CD14-positive monocyte (primary cell): ENCODE measurements at regions of chr16 and their contacts with region 1.

Region 1: DNA sequence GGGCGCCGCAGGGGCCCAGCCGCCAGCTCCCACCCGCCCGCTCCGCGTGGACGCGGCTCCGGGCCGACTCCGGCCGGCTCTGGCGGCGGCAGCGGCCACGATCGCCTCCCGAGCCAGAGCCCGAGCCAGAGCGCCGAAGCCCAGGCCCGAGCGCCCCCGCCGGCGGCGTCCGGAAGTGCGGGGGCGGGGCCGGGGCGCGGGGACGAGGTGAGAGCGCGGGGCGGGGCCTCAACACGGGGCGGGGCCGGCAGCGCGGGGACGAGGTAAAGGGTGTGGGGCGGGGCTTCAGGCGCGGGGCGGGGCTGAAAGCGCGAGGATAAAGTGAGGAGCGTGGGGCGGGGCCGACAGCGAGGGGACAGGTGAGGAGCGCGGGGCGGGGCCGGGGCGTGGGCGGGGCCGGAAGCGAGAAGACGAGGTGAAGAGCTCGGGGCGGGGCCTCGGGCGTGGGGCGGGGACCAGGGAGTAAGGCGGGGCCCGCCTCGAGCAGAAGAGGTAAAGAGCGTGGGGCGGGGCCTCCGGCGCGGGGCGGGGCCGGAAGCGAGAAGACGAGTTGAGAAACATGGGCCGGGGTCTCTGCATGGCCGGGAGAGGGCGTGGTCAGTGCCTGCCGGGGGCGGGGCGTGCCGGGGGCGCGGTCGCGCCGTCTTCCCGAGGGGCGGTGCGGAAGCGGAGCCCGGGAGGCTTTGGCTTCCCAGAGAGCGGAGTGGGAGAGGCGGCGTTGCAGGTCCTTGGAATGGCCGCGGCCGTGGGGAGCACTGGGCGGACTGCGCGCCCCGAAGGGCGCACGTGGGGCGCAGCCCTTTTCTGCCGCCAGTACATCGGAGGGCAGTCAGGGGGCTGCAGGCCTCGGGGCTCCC is at the start of gene AXIN1:
- DNase-seq: peak; percentile 91 to 93 (median 92)
- H3K4me3 ChIP-seq: peak within 1 kb of the TSS; percentile 51 to 79 (median 73)
- H3K4me3 Mint-ChIP-seq: peak within 1 kb of the TSS; percentile 84 to 87
- H3K27ac ChIP-seq: peak within 1 kb of the TSS in 1 of 2 donors; percentile 56
- H3K27ac Mint-ChIP-seq: peak within 1 kb of the TSS in 6 of 7 donors; percentile 56 to 86 (median 79)
- H3K4me1 ChIP-seq: peaks cover 12 to 25% of the 10 kb centered on the region in 2 donors
- H3K4me1 Mint-ChIP-seq: peaks cover 34% of the 10 kb centered on the region
- H3K27me3 ChIP-seq: no peaks in the 10 kb centered on the region
- H3K27me3 Mint-ChIP-seq: peaks cover 0 to 4% (median 3%) of the 10 kb centered on the region in 3 donors
- CTCF ChIP-seq: peak; percentile 35
- polyA plus RNA-seq, gene AXIN1: 0.30 to 20.9 (median 0.74) TPM

Region 2: DNA sequence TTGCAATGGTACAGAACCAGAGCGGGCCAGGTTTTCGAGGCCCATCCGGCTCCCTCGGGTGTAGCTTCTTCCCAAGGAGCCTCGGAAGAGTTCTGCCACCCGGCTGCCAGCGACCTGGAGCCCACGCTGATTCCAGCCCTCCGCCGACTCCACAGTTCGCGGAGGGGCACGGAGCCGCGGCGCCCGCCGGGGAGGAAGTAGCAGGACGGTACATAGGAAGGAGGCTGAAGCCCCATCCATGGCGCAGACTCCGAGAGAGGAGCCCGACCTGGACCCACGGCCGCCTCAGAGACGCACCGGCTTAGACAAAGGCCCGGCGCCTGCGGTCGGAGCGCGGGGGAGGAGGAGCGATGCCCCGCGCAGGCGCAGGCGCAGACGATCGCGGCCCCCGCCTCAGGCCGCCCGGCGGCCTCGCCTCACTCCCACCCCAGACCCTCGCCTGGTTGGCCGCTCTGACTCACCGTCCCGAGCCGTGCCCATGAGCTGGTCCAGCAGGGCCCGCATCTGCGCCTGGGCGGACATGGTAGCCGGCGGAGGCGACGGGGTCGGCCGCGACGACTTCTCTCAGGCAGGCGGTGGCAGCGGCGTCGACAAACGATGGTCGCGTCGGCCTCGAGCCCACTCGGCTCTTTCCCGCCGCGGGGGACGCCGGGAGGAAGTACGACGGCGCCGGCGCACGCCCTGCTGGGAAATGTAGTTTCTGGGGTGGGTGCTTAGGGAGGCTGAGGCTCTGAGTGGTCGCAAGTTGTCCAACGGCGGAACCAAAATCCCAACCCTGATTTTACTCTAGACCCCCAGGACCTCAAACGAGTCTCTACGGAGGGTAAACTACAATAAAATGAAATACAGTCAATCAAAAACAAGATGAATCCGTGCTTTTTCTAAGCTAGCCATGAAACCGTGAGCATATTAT is 123.7 kb before region 1 on chr16 and contains the start of gene LUC7L:
- intact Hi-C with region 1: loop called (anchors 2 to 5 kb)
- DNase-seq: peak; percentile 62 to 81 (median 67)
- H3K4me3 ChIP-seq: peak within 1 kb of the TSS; percentile 72 to 89 (median 87)
- H3K4me3 Mint-ChIP-seq: peak within 1 kb of the TSS; percentile 86 to 91
- H3K27ac ChIP-seq: peak within 1 kb of the TSS; percentile 74 to 94
- H3K27ac Mint-ChIP-seq: peak within 1 kb of the TSS; percentile 90 to 96 (median 94)
- H3K4me1 ChIP-seq: peaks cover 20 to 29% of the 10 kb centered on the region in 2 donors
- H3K4me1 Mint-ChIP-seq: peaks cover 16% of the 10 kb centered on the region
- H3K27me3 ChIP-seq: no peaks in the 10 kb centered on the region
- H3K27me3 Mint-ChIP-seq: peaks cover 0 to 1% (median 1%) of the 10 kb centered on the region in 3 donors
- CTCF ChIP-seq: no peak
- polyA plus RNA-seq, gene LUC7L: 4.0 to 109 (median 4.6) TPM

Region 3: GRCh38 chr16:234468-235305 is 118.1 kb before region 1 on chr16 and contains the start of gene FAM234A:
- intact Hi-C with region 1: loop called (anchors 2 to 5 kb)
- DNase-seq: peak; percentile 94 to 95 (median 95)
- H3K4me3 ChIP-seq: peak within 1 kb of the TSS; percentile 79 to 95 (median 94)
- H3K4me3 Mint-ChIP-seq: peak within 1 kb of the TSS; percentile 96 to 99
- H3K27ac ChIP-seq: peak within 1 kb of the TSS; percentile 100
- H3K27ac Mint-ChIP-seq: peak within 1 kb of the TSS; percentile 100
- H3K4me1 ChIP-seq: peaks cover 18 to 20% of the 10 kb centered on the region in 2 donors
- H3K4me1 Mint-ChIP-seq: peaks cover 13% of the 10 kb centered on the region
- H3K27me3 ChIP-seq: no peaks in the 10 kb centered on the region
- H3K27me3 Mint-ChIP-seq: peaks cover 0 to 6% (median 1%) of the 10 kb centered on the region in 3 donors
- CTCF ChIP-seq: peak; percentile 41
- polyA plus RNA-seq, gene FAM234A: 22.5 to 40.4 (median 25.1) TPM

Region 4: DNA sequence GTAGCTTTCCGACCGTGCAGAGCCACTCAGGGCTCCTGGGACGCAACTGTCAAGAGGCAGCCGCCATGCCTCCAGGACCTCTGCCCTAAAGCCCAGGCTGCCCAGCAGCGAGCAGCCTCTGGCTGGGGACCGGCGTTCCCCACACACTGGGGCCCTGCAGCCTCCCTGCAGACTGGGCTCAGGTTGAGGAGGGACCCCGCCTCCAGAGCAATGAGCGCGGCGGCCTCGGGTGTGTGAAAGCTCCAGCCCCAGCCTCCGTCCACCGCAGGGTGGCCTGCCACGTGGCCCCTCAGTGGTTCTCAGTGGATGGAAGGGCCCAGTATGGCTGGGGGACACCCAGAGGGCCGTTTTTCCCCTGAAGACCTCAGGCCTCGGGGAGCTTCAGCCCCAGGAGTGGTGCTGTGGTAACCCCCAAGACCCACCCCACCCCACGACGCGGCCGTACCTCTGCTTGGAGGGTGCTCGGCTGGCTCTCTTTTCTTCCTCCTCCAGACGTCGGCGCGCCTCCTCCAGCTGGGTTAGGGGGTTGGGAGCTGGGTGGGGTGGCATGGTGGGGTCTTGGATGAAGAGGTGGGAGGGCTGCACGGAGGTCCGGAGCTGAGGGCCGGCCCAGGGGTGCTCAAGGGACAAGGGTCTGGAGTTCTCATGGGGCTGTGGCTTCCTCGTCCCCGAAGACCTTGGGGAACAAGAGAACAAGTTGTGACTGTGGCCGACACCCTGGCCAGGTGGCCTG is 59.6 kb before region 1 on chr16:
- intact Hi-C with region 1: no loop called
- DNase-seq: no peak
- H3K4me3 ChIP-seq: no peak overlapping the region
- H3K4me3 Mint-ChIP-seq: no peak overlapping the region
- H3K27ac ChIP-seq: no peak overlapping the region
- H3K27ac Mint-ChIP-seq: no peak overlapping the region
- H3K4me1 ChIP-seq: no peaks in the 10 kb centered on the region
- H3K4me1 Mint-ChIP-seq: no peaks in the 10 kb centered on the region
- H3K27me3 ChIP-seq: no peaks in the 10 kb centered on the region
- H3K27me3 Mint-ChIP-seq: no peaks in the 10 kb centered on the region
- CTCF ChIP-seq: no peak

Region 5: GRCh38 chr16:303760-304505 is 48.8 kb before region 1 on chr16:
- intact Hi-C with region 1: loop called in 1 of 2 experiments (anchors 5 kb)
- DNase-seq: peak; percentile 33 to 43 (median 41)
- H3K4me3 ChIP-seq: no peak overlapping the region
- H3K4me3 Mint-ChIP-seq: no peak overlapping the region
- H3K27ac ChIP-seq: no peak overlapping the region
- H3K27ac Mint-ChIP-seq: peak overlapping the region in 6 of 7 donors; percentile 34 to 74 (median 55)
- H3K4me1 ChIP-seq: no peaks in the 10 kb centered on the region
- H3K4me1 Mint-ChIP-seq: no peaks in the 10 kb centered on the region
- H3K27me3 ChIP-seq: no peaks in the 10 kb centered on the region
- H3K27me3 Mint-ChIP-seq: peaks cover 0 to 1% (median 0%) of the 10 kb centered on the region in 3 donors
- CTCF ChIP-seq: peak; percentile 22

Region 6: GRCh38 chr16:381789-382717 is 29.3 kb after region 1 on chr16 and contains the start of gene PGAP6:
- intact Hi-C with region 1: loop called in 1 of 2 experiments (anchors 2 kb)
- DNase-seq: peak; percentile 39 to 72 (median 54)
- H3K4me3 ChIP-seq: peak within 1 kb of the TSS; percentile 78 to 92 (median 88)
- H3K4me3 Mint-ChIP-seq: peak within 1 kb of the TSS; percentile 91 to 92
- H3K27ac ChIP-seq: peak within 1 kb of the TSS in 1 of 2 donors; percentile 71
- H3K27ac Mint-ChIP-seq: peak within 1 kb of the TSS in 6 of 7 donors; percentile 49 to 93 (median 69)
- H3K4me1 ChIP-seq: peaks cover 39 to 52% of the 10 kb centered on the region in 2 donors
- H3K4me1 Mint-ChIP-seq: peaks cover 39% of the 10 kb centered on the region
- H3K27me3 ChIP-seq: no peaks in the 10 kb centered on the region
- H3K27me3 Mint-ChIP-seq: peaks cover 0 to 14% (median 9%) of the 10 kb centered on the region in 3 donors
- CTCF ChIP-seq: no peak
- polyA plus RNA-seq, gene PGAP6: 18.2 to 137 (median 39.8) TPM

Region 7: GRCh38 chr16:401468-402348 is 48.9 kb after region 1 on chr16 and contains the start of gene DECR2:
- intact Hi-C with region 1: no loop called
- DNase-seq: peak; percentile 81 to 88 (median 83)
- H3K4me3 ChIP-seq: peak within 1 kb of the TSS; percentile 86 to 97 (median 92)
- H3K4me3 Mint-ChIP-seq: peak within 1 kb of the TSS; percentile 93 to 97
- H3K27ac ChIP-seq: peak within 1 kb of the TSS; percentile 78 to 85
- H3K27ac Mint-ChIP-seq: peak within 1 kb of the TSS; percentile 90 to 98 (median 97)
- H3K4me1 ChIP-seq: peaks cover 25 to 32% of the 10 kb centered on the region in 2 donors
- H3K4me1 Mint-ChIP-seq: peaks cover 24% of the 10 kb centered on the region
- H3K27me3 ChIP-seq: no peaks in the 10 kb centered on the region
- H3K27me3 Mint-ChIP-seq: peaks cover under 1% of the 10 kb centered on the region in 3 donors
- CTCF ChIP-seq: peak; percentile 59
- polyA plus RNA-seq, gene DECR2: 5.7 to 12.8 (median 8.7) TPM

Region 8: DNA sequence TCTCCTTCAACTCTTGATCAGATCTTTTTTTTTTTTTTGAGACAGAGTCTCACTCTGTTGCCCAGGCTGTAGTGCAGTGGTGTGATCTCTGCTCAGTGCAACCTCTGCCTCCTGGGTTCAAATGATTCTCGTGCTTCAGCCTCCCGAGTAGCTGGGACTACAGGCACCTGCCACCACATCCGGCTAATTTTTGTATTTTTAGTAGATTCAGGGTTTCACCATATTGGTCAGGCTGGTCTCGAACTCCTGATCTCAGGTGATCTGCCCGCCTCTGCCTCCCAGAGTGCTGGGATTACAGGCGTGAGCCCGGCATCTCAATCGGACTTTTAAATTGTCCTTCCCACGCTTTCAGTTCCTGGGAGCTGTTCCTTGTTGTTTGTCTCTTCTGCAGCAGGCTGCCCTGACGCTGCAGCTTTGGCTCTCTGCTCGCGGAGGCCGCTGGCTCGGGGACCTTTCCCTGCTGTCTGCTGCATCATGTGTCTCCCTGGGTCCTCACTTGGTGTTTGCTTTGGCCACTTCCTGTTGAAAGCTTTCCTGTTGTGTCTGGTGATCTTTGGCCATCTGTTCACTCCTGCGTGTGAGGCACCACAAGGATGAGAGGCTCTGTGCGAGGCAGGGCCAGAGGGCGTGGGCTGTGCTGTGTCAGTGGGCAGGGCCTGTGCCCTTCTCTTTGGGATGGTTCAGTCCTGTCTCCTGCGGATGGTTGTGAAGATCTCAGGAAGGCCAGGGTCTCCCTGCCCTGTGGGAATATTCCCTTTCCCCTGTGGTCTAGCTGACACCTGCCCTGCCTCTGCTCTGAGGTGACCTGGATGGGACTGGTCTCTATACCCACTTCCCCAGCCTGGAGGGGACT is 156.3 kb after region 1 on chr16:
- intact Hi-C with region 1: no loop called
- DNase-seq: no peak
- H3K4me3 ChIP-seq: no peak overlapping the region
- H3K4me3 Mint-ChIP-seq: no peak overlapping the region
- H3K27ac ChIP-seq: no peak overlapping the region
- H3K27ac Mint-ChIP-seq: no peak overlapping the region
- H3K4me1 ChIP-seq: no peaks in the 10 kb centered on the region
- H3K4me1 Mint-ChIP-seq: no peaks in the 10 kb centered on the region
- H3K27me3 ChIP-seq: no peaks in the 10 kb centered on the region
- H3K27me3 Mint-ChIP-seq: no peaks in the 10 kb centered on the region
- CTCF ChIP-seq: no peak